ENCODE measurements at regions of chr5 and their contacts with region 1.

Region 1: DNA sequence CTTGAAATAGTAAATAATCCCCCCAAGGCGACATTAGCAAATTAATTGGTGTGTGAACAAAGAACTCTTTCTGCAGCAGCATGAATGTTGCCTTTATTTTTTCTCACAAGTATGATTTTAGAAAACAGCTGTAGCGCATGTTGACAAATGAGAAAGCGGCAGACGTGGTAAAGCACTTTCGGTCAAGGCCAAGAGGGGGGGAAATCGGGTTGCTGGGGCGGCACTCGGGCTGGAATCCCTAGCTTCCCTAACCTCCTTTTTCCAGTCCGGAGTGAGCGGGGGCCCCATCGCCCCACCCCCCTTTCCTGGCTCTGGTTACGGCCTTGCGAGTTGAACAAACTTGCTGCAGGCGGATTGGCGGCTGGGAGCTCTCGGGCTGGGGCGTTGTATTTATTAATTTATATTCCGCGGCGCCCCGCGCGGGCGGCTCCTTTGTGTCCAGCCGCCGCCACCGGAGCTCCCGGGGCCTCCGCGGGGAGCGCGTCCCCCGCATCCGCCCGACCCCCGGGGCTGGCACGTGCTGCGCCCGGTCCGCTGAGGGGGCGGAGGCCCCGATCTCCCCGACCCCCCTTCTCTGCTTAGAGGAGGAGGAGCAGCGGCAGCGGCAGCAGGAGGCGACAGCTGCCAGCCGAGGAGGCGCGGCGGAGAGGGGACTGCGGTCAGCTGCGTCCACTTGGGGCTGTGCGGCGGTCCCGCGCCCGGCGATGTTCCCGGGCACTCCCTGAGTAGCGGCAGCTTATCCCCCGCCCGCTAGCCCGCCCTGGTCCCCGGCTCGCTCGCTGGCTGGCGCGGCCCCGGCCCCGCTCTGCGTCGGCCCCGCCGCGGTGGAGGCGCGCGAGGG is at the start of gene RHOBTB3:
- DNase-seq: peak; percentile 61 to 87 (median 77)
- H3K4me3 ChIP-seq: peak within 1 kb of the TSS; percentile 69 to 96 (median 86)
- H3K27ac ChIP-seq: peak within 1 kb of the TSS; percentile 44 to 84
- H3K4me1 ChIP-seq: peaks cover 14 to 41% (median 25%) of the 10 kb centered on the region in 4 experiments
- H3K27me3 ChIP-seq: no peaks in the 10 kb centered on the region

Region 2: DNA sequence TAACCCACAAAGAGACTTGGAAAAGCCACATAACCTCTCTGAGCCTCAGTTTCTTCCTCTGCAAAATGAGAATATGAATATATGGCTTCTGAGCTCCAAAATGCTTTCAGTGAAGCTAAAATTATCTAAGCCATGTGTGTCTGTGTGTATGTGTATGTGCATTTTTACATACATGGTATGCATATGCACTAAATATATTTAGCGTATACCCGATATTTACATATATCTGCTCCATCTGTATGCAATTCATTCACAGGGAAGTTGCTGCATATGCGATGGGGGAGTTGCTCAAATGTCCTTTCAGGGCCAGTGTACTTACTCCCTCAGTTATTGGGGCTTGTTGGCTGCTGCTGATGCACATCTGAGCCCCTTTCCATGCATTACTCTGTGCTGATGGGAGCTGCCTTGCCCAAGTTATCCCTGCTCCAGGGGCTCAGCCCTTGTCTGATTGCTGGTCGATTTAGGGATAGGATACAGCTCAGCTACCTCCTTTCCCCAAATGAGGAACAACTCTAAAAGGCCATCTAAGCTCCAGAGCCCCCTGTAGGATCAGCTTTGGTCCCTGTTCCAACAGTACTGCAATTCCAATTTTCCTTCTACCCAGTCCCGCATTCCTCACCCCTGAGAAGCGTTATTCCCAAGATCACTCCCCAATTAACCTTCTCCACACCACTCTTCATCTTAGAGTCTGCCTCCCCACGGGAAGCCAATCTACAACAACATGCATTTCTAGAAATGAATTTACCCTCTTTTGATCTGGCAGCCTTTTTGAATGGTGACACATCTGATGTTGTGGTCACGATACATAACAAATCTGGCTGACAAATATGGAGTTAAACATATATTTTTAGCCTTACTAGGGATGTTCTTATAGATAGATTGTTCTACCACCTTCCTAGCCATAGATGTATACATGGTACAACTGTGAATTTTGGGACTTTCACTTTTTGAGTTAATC is 16.1 kb after region 1 on chr5:
- CTCF ChIA-PET with region 1: interaction called, 10 read pairs
- POLR2A ChIA-PET with region 1: no interaction called
- DNase-seq: no peak
- H3K4me3 ChIP-seq: no peak overlapping the region
- H3K27ac ChIP-seq: no peak overlapping the region
- H3K4me1 ChIP-seq: no peaks in the 10 kb centered on the region
- H3K27me3 ChIP-seq: no peaks in the 10 kb centered on the region